GM10248 (cell line): ENCODE measurements at regions of chr2 and their contacts with region 1.

Region 1: DNA sequence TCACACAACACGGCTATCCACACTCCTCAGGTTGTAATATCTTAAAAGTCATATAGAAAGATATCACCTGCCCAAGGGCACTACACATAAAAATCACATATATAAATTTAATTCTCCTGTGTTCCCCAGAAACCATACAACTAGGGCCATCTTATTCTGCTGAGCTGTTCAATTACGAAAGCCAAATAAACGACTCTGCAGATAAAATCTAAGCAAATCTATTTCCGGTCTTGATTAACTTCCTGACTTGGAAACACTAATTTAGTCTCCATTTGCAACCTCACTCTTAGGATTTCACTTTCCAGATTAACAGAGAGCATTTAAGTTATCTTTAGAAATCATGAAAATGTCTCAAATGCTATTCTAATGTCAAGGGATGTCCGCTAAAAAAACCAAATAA is 23.9 kb upstream of the STK17B start:
- DNase-seq: no peak
- CTCF ChIP-seq: no peak

Region 2: DNA sequence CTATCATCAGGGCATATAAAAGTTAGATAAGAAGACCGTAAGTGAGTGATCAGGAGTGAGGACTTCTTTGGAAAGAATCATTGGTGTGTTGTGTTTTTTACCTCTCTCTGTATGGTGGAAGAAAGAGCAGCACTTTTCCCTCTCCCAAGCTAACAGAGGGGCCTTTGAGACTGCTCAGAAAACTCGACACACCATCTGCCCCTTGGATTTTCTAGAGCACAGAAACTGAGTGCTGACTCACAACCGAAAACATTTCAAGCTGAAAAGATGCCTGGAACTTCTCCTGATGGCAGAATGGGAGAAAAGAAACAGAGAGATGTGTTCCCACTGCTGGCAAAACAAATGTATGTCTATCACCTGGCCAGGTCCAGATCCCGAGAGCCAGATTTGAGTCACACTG is 283.2 kb before region 1 on chr2:
- CTCF ChIA-PET with region 1: no interaction called
- POLR2A ChIA-PET with region 1: no interaction called
- DNase-seq: no peak
- CTCF ChIP-seq: no peak

Region 3: DNA sequence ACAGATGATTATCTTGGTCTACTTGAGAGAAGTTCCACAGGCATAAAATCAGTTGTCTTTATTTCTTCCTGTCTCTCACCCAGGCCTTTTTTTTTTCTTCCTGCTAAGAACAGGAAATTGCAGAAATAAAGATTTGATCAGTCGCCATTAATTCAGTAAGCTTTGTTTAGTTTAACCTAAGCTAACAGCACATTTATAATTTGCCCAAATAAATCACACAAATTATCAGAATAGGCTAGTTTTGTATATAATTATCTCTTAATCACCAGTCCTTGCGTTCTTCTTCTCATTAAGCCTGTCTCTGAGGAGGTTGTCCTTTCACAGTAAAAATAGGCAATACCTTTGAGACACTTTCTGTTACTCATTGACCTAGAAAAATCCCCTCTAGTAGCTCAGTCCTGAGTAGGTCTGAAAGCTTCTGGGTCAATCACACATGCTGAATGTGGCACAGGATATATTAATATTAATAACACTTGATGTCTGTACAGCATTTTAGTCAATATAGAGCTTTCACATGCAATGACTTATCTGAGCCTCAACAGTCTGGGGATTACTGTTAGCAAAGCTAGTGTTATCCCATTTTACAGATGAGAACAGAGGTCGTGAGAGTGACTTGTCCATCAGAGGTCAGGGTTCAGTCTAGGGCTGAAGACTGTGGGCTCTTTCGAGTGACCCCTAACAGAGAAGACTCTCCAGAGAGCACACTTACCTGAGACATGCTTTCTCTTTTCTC is 12.7 kb before region 1 on chr2:
- CTCF ChIA-PET with region 1: interaction called, 10 read pairs
- POLR2A ChIA-PET with region 1: no interaction called
- DNase-seq: peak; percentile 55
- CTCF ChIP-seq: no peak

Region 4: GRCh38 chr2:196205881-196206435 is 10.7 kb after region 1 on chr2:
- CTCF ChIA-PET with region 1: interaction called, 14 read pairs
- POLR2A ChIA-PET with region 1: no interaction called
- DNase-seq: no peak
- CTCF ChIP-seq: no peak

Region 5: DNA sequence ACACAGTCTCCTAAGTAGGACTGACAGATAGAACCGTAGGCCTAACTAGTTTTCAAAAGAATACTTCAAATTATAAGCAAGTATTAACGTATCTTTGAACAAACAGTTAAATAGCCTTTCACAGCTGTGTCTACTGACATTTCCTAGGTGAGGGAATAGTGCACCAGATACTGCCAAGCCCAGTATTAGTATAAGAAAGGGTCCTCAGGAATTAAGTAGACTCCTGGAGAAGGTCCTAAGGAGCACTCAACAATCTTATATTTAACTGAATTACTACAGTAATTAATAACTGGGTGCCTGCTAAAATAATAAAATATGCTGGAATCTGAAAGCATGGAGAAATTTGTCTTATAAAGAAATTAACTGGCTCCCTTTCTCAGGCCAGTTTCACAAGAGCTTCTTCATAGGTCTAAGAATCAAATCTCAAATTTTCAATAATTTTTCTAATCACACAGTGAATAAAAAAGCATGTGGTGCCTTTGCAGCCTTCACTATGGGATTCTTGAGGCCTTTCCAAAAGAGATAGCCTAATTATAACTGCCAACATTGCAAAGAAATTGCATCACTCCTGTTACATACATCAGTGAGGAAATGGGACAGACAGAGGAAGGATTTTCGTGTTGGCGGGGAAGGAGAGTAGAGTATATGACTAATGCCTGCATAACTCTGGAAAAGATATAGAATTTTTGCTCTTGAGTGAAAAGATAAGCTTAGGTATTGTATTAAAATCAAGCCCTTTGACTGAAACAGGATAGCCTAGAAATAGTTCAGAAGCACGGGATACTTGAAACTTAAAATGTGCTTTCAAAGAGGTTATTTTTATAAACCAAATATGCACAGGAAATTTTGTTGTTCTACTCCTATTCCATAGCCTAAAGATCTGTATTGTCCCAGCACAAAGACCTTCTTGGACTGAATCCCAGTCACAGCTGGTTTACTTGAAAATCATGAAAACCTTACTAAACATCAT is 204.7 kb after region 1 on chr2:
- CTCF ChIA-PET with region 1: no interaction called
- POLR2A ChIA-PET with region 1: no interaction called
- DNase-seq: no peak
- CTCF ChIP-seq: no peak